Caco-2 (cell line): ENCODE measurements at regions of chr22 and their contacts with region 1.

Region 1: DNA sequence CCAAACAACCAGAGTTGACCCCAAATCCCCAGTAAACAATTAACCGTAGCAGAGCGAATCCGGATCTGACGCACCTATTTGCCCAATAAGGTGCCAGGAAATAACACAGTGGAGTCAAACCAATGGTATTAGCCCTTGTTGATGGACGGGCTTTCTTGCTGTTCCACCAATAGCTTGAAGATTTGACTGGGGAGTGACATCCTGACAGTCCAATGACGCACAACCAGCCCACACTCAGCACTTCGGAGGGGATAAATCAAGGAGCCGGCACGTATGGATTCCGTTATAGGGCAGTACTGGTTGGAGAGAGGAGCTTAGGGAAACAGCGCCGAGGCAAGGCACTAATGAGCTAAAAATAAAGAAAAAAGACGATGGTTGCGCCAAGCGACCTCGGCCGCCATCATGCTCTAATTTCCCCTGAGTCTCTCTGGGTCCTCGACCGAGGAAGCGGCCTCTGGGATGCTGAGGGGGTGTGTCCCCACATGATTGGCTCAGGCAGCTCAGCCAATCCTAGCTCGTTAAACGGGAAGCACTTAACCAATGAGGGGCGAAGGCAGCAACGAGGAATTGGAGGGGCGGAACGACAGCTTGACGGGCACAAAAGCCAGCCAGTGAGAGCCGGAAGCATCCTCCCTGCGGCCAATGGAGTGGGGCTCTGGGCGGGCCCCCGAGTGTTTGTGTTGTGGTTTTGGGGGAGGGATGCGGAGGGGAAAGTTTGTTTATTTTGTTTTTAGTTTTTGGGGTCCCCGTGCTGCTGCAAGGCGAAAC is 49.5 kb downstream of the FAM83F start:
- DNase-seq: peak; percentile 98
- H3K4me3 ChIP-seq: peak overlapping the region; percentile 58
- H3K4me3 Mint-ChIP-seq: peak overlapping the region; percentile 97
- H3K27ac Mint-ChIP-seq: peak overlapping the region; percentile 98
- H3K4me1 ChIP-seq: no peaks in the 10 kb centered on the region; the same call in 1 of the 2 replicates
- H3K4me1 Mint-ChIP-seq: no peaks in the 10 kb centered on the region
- H3K27me3 ChIP-seq: no peaks in the 10 kb centered on the region
- H3K27me3 Mint-ChIP-seq: peaks cover 11% of the 10 kb centered on the region
- CTCF ChIP-seq: no peak

Region 2: DNA sequence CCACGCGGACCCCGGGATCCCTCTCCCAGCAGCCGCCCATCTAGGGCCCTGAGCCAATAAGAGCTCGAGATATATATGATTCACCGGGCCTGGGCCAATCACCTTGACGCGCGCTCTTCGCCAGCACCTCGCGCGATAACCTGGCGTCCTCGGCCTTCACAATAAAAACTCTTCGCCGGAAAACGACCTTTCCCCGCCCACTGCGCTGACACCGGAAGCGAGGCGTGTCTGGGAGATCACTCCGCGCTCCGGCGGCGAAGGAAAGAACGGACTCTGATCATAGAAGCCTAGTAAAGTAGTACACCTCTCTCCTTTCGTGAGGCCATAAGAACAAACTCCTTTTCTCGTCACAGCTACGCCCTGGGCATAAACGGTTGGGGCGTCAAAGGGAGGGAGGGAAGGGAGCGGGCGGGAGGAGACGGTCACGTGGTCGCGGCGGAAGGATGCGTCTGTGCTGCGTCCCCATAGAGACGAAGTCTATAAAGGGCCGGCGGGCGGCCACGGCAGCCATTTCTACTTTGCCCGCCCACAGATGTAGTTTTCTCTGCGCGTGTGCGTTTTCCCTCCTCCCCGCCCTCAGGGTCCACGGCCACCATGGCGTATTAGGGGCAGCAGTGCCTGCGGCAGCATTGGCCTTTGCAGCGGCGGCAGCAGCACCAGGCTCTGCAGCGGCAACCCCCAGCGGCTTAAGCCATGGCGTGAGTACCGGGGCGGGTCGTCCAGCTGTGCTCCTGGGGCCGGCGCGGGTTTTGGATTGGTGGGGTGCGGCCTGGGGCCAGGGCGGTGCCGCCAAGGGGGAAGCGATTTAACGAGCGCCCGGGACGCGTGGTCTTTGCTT is 524.0 kb before region 1 on chr22 and contains the start of gene ATF4:
- CTCF ChIA-PET with region 1: no interaction called
- POLR2A ChIA-PET with region 1: interaction called, 15 read pairs
- intact Hi-C with region 1: no loop called
- DNase-seq: peak; percentile 97 to 98
- H3K4me3 ChIP-seq: peak within 1 kb of the TSS; percentile 91
- H3K4me3 Mint-ChIP-seq: peak within 1 kb of the TSS; percentile 79
- H3K27ac Mint-ChIP-seq: peak within 1 kb of the TSS; percentile 98
- H3K4me1 ChIP-seq: peaks cover 26% of the 10 kb centered on the region
- H3K4me1 Mint-ChIP-seq: peaks cover 38% of the 10 kb centered on the region
- H3K27me3 ChIP-seq: no peaks in the 10 kb centered on the region
- H3K27me3 Mint-ChIP-seq: no peaks in the 10 kb centered on the region
- CTCF ChIP-seq: no peak
- total RNA-seq, gene ATF4: 610 and 647 TPM in 2 replicates

Region 3: DNA sequence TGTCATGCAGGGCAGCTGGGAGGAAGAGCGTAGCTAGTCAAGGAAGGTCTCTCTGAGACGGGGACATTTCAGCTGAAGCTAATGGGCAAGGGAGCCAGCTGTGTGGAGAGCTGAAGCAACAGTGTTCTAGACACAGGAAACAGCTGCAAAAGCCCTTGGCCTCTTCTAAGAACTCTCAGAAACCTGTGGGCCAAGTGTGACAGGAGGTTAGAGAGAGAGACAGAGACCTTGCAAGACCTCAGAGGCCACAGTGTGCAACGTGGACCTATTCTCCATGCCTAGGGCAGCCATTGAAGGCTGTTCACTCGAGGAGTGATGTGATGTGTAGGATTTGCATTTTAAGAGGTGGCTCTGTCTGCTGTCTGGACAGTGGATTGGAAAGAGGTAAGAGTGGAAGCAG is 84.7 kb after region 1 on chr22:
- CTCF ChIA-PET with region 1: no interaction called
- POLR2A ChIA-PET with region 1: no interaction called
- intact Hi-C with region 1: no loop called
- DNase-seq: no peak
- H3K4me3 ChIP-seq: no peak overlapping the region
- H3K4me3 Mint-ChIP-seq: no peak overlapping the region
- H3K27ac Mint-ChIP-seq: no peak overlapping the region
- H3K4me1 ChIP-seq: no peaks in the 10 kb centered on the region
- H3K4me1 Mint-ChIP-seq: no peaks in the 10 kb centered on the region
- H3K27me3 ChIP-seq: no peaks in the 10 kb centered on the region
- H3K27me3 Mint-ChIP-seq: no peaks in the 10 kb centered on the region
- CTCF ChIP-seq: no peak

Region 4: GRCh38 chr22:40156001-40156516 is 111.8 kb after region 1 on chr22:
- CTCF ChIA-PET with region 1: no interaction called
- POLR2A ChIA-PET with region 1: no interaction called
- intact Hi-C with region 1: loop called (anchors 1 kb)
- DNase-seq: peak; percentile 79 to 81
- H3K4me3 ChIP-seq: no peak overlapping the region
- H3K4me3 Mint-ChIP-seq: no peak overlapping the region
- H3K27ac Mint-ChIP-seq: peak overlapping the region; percentile 57
- H3K4me1 ChIP-seq: peaks cover 8% of the 10 kb centered on the region
- H3K4me1 Mint-ChIP-seq: peaks cover 21% of the 10 kb centered on the region
- H3K27me3 ChIP-seq: no peaks in the 10 kb centered on the region
- H3K27me3 Mint-ChIP-seq: no peaks in the 10 kb centered on the region
- CTCF ChIP-seq: peak in 1 of 2 experiments; percentile 16

Region 5: DNA sequence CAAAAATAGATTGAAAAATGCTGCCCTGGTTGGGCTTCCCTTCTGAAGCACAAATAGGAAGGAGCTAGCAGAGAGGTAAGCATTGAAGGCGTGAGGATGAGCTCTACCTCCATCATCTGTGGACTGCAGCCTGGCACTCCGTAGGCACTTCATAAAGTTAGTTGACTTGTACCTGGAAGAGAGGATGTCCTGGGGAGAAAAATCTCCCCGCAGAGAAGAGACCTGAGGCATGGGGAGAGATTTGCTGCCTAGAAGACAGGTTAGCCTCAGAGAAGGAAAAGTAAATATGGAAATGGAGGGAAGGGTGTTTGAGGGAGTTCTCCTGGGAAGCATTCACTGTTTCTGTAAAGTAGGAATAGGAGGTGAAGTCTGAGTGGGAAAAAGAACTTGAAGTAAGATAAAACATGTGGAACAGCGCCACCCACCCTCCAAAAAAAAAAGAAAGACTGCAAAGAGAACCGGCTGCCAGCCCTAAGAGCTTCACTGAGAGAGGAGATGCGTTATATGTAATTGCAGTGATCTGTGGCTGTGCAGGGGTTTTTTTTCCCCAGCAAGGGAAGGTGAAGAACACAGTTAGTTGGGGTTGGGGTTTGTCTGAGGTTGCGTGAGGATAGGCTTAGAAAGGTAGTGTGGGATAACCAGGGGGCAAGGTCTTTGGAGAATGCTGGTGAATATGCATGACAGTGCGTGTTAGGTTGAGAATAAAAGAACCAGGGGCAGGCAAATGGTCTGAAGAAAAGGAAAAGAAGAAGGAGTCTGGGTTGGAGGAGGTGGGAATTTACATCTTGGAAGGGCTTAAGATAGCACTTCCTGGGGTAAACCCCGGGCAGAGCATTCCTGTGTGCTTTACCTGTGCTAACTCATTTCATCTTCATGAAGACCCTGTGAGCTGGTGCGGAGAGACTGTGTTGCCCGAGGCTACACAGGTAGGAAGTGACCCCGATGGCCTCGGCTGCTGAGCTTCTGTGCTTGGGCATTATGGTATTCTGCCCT is 149.4 kb after region 1 on chr22:
- CTCF ChIA-PET with region 1: interaction called, 7 read pairs
- POLR2A ChIA-PET with region 1: interaction called, 7 read pairs
- intact Hi-C with region 1: loop called (anchors 5 kb)
- DNase-seq: peak in 1 of 2 experiments; percentile 33
- H3K4me3 ChIP-seq: no peak overlapping the region
- H3K4me3 Mint-ChIP-seq: no peak overlapping the region
- H3K27ac Mint-ChIP-seq: no peak overlapping the region
- H3K4me1 ChIP-seq: 0 out of 2 replicates have a peak, but pooled peaks cover 5% of the 10 kb centered on the region
- H3K4me1 Mint-ChIP-seq: peaks cover 13% of the 10 kb centered on the region
- H3K27me3 ChIP-seq: no peaks in the 10 kb centered on the region
- H3K27me3 Mint-ChIP-seq: no peaks in the 10 kb centered on the region
- CTCF ChIP-seq: peak; percentile 39 to 43

Region 6: GRCh38 chr22:40346178-40347118 is 302.2 kb after region 1 on chr22 and contains the start of gene ADSL:
- CTCF ChIA-PET with region 1: interaction called, 3 read pairs
- POLR2A ChIA-PET with region 1: no interaction called
- intact Hi-C with region 1: loop called (anchors 1 kb)
- DNase-seq: peak; percentile 87 to 91
- H3K4me3 ChIP-seq: peak within 1 kb of the TSS; percentile 90
- H3K4me3 Mint-ChIP-seq: peak within 1 kb of the TSS; percentile 95
- H3K27ac Mint-ChIP-seq: peak within 1 kb of the TSS; percentile 93
- H3K4me1 ChIP-seq: peaks cover 9% of the 10 kb centered on the region
- H3K4me1 Mint-ChIP-seq: peaks cover 9% of the 10 kb centered on the region
- H3K27me3 ChIP-seq: no peaks in the 10 kb centered on the region
- H3K27me3 Mint-ChIP-seq: no peaks in the 10 kb centered on the region
- CTCF ChIP-seq: no peak
- total RNA-seq, gene ADSL: 120 and 123 TPM in 2 replicates